ENCODE measurements at regions of chr9 and their contacts with region 1.

Region 1: GRCh38 chr9:125820100-125820804 is 73.1 kb downstream of the PBX3 start:
- DNase-seq: no peak
- ATAC-seq: no peak
- H3K4me3 Mint-ChIP-seq: peak overlapping the region; percentile 19
- H3K27ac Mint-ChIP-seq: peak overlapping the region; percentile 35
- H3K4me1 Mint-ChIP-seq: peaks cover 46% of the 10 kb centered on the region
- H3K27me3 Mint-ChIP-seq: no peaks in the 10 kb centered on the region
- CTCF ChIP-seq: no peak

Region 2: DNA sequence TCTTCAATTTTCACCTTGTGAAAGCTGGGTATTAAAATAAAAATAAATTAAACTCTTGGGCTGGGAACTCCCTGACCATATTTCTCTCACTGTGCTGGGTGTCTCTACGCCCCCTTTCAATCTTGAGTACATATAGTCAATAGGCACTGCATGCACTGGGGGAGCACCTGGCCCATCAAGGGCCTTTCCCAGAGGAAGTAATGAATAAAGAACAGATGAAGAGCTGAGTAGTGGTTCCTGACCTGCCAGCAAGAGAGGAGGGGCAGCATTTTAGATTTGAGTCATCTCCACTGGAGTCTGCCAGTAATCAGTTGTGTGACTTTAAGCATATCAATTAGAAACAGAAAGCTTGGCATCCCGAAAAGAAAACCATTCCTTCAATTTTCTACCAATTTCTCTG is 119.5 kb before region 1 on chr9:
- CTCF ChIA-PET with region 1: no interaction called
- POLR2A ChIA-PET with region 1: no interaction called
- intact Hi-C with region 1: loop called (anchors 5 kb)
- DNase-seq: peak; percentile 20
- ATAC-seq: peak; percentile 99
- H3K4me3 Mint-ChIP-seq: peak overlapping the region; percentile 68
- H3K27ac Mint-ChIP-seq: peak overlapping the region; percentile 46
- H3K4me1 Mint-ChIP-seq: peaks cover 74% of the 10 kb centered on the region
- H3K27me3 Mint-ChIP-seq: no peaks in the 10 kb centered on the region
- CTCF ChIP-seq: no peak

Region 3: DNA sequence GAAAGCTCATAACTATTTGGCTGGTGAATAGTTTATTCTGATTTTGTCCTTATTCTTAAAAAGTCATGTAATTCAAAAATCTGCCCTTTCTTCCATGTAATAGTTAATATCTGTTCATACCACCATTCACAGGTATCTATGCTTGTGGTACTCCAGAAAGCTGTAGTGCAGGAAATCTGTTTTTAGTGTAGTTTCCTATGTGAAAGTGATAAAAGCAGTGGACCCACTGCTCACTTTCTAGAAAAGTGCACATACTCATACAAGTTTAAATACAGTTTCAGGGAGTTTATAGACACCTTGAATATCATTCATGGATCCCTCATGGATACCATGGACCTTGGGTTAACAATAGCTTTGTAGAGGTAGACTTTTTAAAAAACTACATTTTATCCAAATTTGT is 52.9 kb before region 1 on chr9:
- CTCF ChIA-PET with region 1: no interaction called
- POLR2A ChIA-PET with region 1: no interaction called
- intact Hi-C with region 1: loop called (anchors 5 kb)
- DNase-seq: no peak
- ATAC-seq: no peak
- H3K4me3 Mint-ChIP-seq: peak overlapping the region; percentile 3
- H3K27ac Mint-ChIP-seq: no peak overlapping the region
- H3K4me1 Mint-ChIP-seq: peaks cover 21% of the 10 kb centered on the region
- H3K27me3 Mint-ChIP-seq: no peaks in the 10 kb centered on the region
- CTCF ChIP-seq: no peak

Measured in activated B cell treated with CpG ODN at 0.5 μM for 24 hours (primary cell).